ENCODE measurements at regions of chr4 and their contacts with region 1.

Region 1: DNA sequence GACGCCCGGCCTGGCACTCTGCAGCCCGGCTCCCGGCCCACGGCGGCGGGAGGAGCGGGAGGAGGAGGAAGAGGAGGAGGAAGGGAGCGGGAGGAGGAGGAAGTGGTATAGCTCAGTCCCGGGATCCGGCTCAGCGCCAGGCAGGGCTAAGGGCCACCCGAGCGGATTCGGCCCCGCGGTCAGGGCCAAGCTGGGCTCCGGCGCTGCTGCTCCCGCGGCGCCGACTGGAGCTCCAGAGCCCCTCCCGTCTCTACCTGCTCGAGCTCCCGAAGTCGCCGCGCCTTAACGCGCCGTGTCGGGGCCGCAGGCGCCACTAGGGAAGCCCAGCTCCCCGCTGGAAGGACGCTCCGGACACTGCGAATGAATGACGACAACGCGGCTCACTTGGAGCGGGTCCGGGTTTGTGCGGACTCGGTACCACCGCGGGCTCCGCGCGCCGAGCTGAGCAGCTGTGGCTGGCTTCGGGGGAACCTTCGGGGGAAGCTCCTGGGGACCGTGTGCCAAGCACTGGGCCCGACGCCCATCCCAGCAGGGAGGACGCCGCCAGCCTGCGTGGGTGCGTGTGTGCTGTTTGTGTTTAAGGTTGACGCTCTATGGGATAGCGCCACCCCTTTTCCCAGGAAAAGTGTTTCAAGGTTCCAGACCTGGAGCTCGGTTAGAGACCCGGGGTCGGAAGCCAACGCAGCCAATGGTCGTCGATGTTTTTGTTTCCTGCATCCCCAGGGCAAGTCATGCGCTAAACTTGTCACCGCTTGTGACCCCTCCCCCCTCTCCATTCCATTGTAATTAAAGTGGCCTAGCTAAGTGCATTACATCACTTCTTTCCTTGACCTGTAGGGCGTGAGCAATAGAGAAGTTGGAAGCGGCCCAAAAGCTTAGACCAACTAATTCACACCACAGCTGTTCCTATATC is at the start of gene TBC1D9:
- DNase-seq: peak; percentile 87
- H3K4me3 ChIP-seq: peak within 1 kb of the TSS; percentile 72 to 87 (median 81)
- H3K27ac ChIP-seq: peak within 1 kb of the TSS; percentile 79
- H3K4me1 ChIP-seq: peaks cover 5% of the 10 kb centered on the region
- H3K27me3 ChIP-seq: no peaks in the 10 kb centered on the region
- CTCF ChIP-seq: no peak
- total RNA-seq, gene TBC1D9: 23.5 to 42.8 TPM

Region 2: DNA sequence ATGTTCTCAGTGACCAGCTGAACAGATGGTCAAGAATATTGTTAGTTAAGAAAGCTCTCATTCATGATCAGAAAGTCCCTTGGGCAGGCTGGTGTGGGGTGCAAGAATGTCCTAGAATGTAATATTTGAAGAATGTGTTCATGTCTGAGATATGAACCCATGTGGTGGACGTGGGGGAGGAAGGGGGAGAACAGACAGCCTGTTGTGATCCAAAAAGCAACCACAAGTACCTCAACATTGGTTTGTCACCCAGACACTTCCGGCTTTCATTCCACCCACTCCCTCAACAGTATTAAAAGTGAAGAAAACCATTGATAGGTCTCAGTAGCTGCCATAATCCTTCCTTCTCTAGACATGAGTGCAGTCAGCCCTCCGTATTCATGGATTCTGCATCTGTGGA is 684.8 kb before region 1 on chr4:
- CTCF ChIA-PET with region 1: no interaction called
- dilution Hi-C with region 1: no loop called
- in situ Hi-C with region 1: no loop called
- intact Hi-C with region 1: no loop called
- DNase-seq: peak; percentile 75
- H3K4me3 ChIP-seq: no peak overlapping the region
- H3K27ac ChIP-seq: no peak overlapping the region
- H3K4me1 ChIP-seq: peaks cover 14% of the 10 kb centered on the region
- H3K27me3 ChIP-seq: no peaks in the 10 kb centered on the region
- CTCF ChIP-seq: no peak

Region 3: GRCh38 chr4:140213749-140214148 is 542.8 kb before region 1 on chr4:
- CTCF ChIA-PET with region 1: no interaction called
- dilution Hi-C with region 1: no loop called
- in situ Hi-C with region 1: no loop called
- intact Hi-C with region 1: no loop called
- DNase-seq: peak; percentile 51
- H3K4me3 ChIP-seq: no peak overlapping the region
- H3K27ac ChIP-seq: no peak overlapping the region
- H3K4me1 ChIP-seq: peaks cover 9% of the 10 kb centered on the region
- H3K27me3 ChIP-seq: no peaks in the 10 kb centered on the region
- CTCF ChIP-seq: no peak

Region 4: DNA sequence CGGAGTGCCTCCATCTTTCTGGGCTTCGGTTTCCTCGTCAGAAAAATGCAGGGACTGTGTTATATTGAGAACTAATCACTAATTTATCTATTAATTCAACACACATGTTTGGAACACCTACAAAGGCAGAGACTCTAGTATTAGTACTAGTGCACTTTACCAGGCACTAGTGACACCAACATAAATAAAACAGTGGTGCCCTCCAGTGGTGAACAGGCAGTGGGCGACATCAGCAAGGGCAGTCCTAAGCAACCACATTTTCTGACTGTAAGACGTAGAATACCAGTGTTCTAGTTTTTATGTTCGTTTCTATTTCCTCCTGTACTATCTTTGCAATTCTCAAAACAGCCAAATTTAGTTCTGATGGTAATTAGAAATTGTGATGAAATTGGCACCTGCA is 118.7 kb before region 1 on chr4:
- CTCF ChIA-PET with region 1: no interaction called
- dilution Hi-C with region 1: no loop called
- in situ Hi-C with region 1: no loop called
- intact Hi-C with region 1: loop called (anchors 5 kb)
- DNase-seq: no peak
- H3K4me3 ChIP-seq: no peak overlapping the region
- H3K27ac ChIP-seq: no peak overlapping the region
- H3K4me1 ChIP-seq: peaks cover 14% of the 10 kb centered on the region
- H3K27me3 ChIP-seq: no peaks in the 10 kb centered on the region
- CTCF ChIP-seq: peak; percentile 48 to 53

Region 5: GRCh38 chr4:140704964-140705363 is 51.6 kb before region 1 on chr4:
- CTCF ChIA-PET with region 1: no interaction called
- dilution Hi-C with region 1: no loop called
- in situ Hi-C with region 1: no loop called
- intact Hi-C with region 1: loop called (anchors 5 kb)
- DNase-seq: no peak
- H3K4me3 ChIP-seq: no peak overlapping the region
- H3K27ac ChIP-seq: no peak overlapping the region
- H3K4me1 ChIP-seq: peaks cover 26% of the 10 kb centered on the region
- H3K27me3 ChIP-seq: no peaks in the 10 kb centered on the region
- CTCF ChIP-seq: no peak

Region 6: DNA sequence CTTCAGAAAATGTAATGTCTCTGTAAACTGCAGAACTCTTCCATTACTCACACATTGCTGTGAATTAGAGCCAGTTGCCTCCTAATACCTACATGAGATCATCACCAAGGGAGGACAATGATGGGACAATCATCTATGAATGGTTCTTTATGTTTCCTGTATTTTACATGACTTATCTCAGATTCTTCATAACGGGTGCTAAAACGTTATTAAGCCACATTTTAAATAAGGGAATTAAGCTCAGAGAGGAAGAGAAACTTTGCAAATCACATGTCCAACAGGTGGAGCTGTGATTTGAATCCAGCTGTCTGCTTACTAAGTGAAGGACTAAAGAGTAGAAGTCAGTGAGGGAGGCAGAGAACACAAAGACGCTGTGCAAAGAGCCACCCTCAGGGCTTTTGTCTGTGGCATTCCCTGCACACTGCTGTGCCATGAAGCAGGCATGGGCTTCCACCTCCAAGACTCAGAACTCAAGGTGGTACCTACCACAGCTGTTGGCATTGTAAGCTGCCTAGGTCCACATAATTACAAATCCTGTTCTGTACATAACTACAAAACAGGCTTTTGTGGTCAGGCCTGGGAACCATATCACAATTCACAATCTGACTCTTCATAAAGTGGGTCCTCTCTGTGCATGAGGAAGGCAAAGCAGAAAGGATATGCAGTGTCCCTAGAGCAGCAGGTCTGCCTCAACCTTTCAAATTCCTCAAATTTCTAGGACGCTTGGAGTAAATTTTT is 13.2 kb before region 1 on chr4:
- CTCF ChIA-PET with region 1: no interaction called
- dilution Hi-C with region 1: no loop called
- in situ Hi-C with region 1: no loop called
- intact Hi-C with region 1: loop called (anchors 2 kb)
- DNase-seq: peak; percentile 62
- H3K4me3 ChIP-seq: no peak overlapping the region
- H3K27ac ChIP-seq: peak overlapping the region; percentile 11
- H3K4me1 ChIP-seq: peaks cover 29% of the 10 kb centered on the region
- H3K27me3 ChIP-seq: no peaks in the 10 kb centered on the region
- CTCF ChIP-seq: peak in 1 of 2 donors; percentile 36

Region 7: DNA sequence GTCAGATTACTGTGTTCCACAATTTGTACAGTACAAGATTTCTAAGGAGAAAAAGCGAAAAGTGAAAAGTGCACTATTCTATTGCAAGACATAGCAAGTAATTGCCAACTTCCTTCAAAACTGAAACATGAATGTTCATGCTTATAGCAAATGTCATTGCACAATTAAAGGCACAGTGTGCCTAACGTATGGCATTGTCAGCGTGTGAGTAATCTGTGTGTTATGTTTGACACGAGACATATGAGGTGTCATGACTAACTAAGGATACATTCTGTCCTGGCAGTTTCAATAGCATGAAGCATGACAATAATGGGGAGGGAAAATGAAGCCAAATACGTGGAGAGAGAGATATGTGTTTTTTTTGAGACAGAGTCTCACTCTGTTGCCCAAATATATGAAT is 33.2 kb after region 1 on chr4:
- CTCF ChIA-PET with region 1: interaction called, 4 read pairs
- dilution Hi-C with region 1: no loop called
- in situ Hi-C with region 1: no loop called
- intact Hi-C with region 1: loop called (anchors 1 kb)
- DNase-seq: peak; percentile 60
- H3K4me3 ChIP-seq: no peak overlapping the region
- H3K27ac ChIP-seq: no peak overlapping the region
- H3K4me1 ChIP-seq: peaks cover 7% of the 10 kb centered on the region
- H3K27me3 ChIP-seq: no peaks in the 10 kb centered on the region
- CTCF ChIP-seq: no peak

Region 8: DNA sequence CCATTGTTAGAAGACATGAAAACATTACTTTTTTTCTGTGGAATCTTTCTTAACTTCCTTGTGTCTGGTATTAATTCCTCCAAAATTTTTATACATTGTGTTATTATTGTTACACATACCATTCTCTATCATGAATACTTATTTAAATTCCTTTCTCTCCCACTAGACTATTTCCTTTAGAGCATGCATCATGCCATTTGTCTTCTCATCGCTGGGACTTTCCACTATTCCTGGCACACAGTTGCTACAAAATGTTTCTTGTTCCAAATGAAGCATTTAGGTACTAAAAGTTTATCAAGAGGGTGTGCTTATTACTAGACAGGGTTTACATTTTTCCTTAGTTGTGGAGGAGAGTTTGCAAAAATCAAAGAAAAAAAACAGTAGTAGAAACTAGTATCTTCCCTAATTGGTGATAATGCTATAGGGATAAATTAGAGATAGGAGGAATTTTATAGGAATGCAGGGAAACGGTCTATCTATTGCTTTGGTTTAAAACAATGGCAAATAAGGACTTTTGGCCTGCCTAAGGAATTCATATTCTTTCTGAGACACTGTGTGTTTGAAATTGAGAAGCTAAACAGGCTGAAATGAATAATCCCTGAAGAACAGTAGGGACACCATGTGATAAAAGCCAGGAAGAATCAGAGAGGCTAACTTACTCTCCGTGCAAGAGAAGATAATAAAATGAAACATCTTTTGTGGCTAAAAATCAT is 187.1 kb after region 1 on chr4:
- CTCF ChIA-PET with region 1: no interaction called
- dilution Hi-C with region 1: no loop called
- in situ Hi-C with region 1: no loop called
- intact Hi-C with region 1: no loop called
- DNase-seq: no peak
- H3K4me3 ChIP-seq: no peak overlapping the region
- H3K27ac ChIP-seq: no peak overlapping the region
- H3K4me1 ChIP-seq: peaks cover 5% of the 10 kb centered on the region
- H3K27me3 ChIP-seq: peaks cover 1% of the 10 kb centered on the region
- CTCF ChIP-seq: no peak

Region 9: DNA sequence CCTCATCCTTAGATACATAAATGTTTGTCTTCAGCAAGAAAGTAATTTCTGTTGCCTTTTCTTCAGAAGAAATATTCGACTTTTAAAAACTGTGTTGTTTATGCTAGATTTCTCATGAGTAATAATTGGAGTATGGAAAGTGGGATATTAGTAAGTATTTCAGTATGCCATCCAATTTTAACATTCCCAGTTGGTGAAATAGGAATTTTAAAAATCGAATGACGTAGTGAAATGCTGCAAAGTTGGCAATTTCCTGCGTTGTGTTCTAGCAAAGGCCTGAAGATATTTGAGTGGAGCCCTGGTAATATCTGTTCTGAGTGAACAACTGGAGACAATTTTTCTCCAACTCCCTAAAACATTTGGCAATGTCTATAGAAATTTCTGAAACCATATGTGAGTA is 654.3 kb after region 1 on chr4:
- CTCF ChIA-PET with region 1: no interaction called
- dilution Hi-C with region 1: no loop called
- in situ Hi-C with region 1: no loop called
- intact Hi-C with region 1: no loop called
- DNase-seq: no peak
- H3K4me3 ChIP-seq: no peak overlapping the region
- H3K27ac ChIP-seq: no peak overlapping the region
- H3K4me1 ChIP-seq: no peaks in the 10 kb centered on the region
- H3K27me3 ChIP-seq: no peaks in the 10 kb centered on the region
- CTCF ChIP-seq: no peak